ENCODE measurements at regions of chr7 and their contacts with region 1.

Region 1: DNA sequence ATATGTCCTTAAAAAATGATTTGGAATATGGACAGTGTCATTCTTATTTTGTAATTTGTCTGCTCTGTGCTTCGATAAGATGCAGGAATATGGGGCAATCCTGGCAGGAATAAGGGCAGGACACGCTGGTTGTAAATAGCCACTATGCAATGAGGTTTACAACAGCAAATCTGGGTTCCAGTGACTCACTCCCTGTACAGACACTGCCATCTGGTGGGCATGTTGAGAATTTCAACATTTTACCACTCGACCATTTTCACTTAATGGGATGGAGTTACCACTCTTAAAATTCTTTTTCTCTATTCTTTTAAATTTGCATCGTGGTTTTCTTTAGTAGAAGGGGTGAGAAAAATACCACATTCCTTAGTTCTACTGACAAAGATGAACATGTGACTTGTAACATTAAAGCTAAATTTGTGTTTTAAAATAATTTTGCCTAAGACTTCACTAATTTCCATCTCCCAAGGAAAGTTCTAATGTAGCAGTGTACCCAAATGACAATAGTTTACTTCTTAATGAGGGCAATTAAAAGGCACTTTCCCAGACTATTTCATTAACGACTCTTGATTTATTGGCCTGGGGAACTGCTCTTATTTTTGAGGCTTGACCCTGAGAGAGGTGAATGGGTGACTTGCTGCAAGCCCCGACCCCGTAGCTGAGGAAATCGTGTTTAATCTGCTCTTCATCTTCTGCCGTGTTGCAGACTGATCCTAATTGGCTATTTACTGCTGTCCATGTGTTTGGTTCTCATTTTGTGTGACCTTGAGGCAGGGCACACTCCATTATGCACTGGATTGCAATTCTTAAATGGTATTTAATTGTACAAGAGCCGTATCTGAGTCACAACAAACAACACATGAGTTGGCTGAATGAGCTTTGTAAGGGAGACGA is 173.6 kb upstream of the IMMP2L start:
- DNase-seq: peak; percentile 22
- H3K4me3 Mint-ChIP-seq: no peak overlapping the region
- H3K27ac Mint-ChIP-seq: no peak overlapping the region
- H3K4me1 Mint-ChIP-seq: no peaks in the 10 kb centered on the region
- H3K27me3 Mint-ChIP-seq: peaks cover 5% of the 10 kb centered on the region

Region 2: DNA sequence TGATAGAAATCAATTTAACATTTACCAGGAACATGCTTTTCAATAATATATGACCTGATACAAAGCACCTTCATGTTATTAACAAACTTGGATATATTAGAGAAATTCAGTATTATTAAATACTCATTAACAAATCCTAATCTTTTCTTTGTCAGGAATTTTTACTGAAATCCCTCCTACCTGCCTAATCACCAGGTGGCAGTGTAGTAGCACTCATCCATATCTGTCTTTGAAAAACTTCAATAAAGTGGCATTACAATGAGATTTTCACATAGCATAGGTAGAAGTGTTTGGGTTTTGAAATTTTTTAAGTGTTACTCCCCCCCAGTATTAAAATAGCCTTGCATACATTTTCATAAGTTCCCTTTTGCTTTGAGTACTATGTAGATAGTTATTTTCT is 1891.5 kb before region 1 on chr7:
- intact Hi-C with region 1: loop called (anchors 5 kb)
- DNase-seq: no peak
- H3K4me3 Mint-ChIP-seq: no peak overlapping the region
- H3K27ac Mint-ChIP-seq: no peak overlapping the region
- H3K4me1 Mint-ChIP-seq: no peaks in the 10 kb centered on the region
- H3K27me3 Mint-ChIP-seq: no peaks in the 10 kb centered on the region

Region 3: DNA sequence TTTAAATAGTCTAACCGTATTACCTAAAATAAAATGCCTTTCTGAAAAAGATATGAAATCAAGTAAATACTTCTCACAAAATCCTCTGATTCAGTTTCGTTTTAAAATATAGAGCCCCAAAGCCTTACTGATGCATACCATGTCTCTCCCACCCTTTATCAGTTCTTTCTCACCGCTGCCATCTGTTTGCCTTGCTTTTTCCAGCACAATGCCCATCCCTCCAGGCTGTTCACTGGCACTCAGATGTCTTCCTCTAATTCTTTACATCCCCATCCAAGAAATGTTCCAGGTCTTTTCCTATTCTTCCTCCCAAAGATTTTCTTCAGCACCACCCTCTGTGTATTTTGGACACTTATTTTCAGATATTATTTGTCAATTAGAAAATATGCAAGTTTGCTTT is 761.5 kb before region 1 on chr7:
- intact Hi-C with region 1: no loop called
- DNase-seq: no peak
- H3K4me3 Mint-ChIP-seq: no peak overlapping the region
- H3K27ac Mint-ChIP-seq: no peak overlapping the region
- H3K4me1 Mint-ChIP-seq: peaks cover 35% of the 10 kb centered on the region
- H3K27me3 Mint-ChIP-seq: no peaks in the 10 kb centered on the region

Region 4: GRCh38 chr7:111329367-111330234 is 406.3 kb before region 1 on chr7:
- intact Hi-C with region 1: loop called (anchors 10 kb)
- DNase-seq: no peak
- H3K4me3 Mint-ChIP-seq: no peak overlapping the region
- H3K27ac Mint-ChIP-seq: no peak overlapping the region
- H3K4me1 Mint-ChIP-seq: peaks cover 2% of the 10 kb centered on the region
- H3K27me3 Mint-ChIP-seq: no peaks in the 10 kb centered on the region